ENCODE measurements at regions of chr7 and their contacts with region 1.

Region 1: GRCh38 chr7:44565097-44565794 is 8.5 kb downstream of the DDX56 start:
- DNase-seq: peak; percentile 88

Region 2: GRCh38 chr7:44490351-44491200 is 74.7 kb before region 1 on chr7 and contains the start of gene NUDCD3:
- intact Hi-C with region 1: loop called (anchors 5 kb)
- DNase-seq: peak; percentile 92
- total RNA-seq, gene NUDCD3: 90.3 TPM

Region 3: DNA sequence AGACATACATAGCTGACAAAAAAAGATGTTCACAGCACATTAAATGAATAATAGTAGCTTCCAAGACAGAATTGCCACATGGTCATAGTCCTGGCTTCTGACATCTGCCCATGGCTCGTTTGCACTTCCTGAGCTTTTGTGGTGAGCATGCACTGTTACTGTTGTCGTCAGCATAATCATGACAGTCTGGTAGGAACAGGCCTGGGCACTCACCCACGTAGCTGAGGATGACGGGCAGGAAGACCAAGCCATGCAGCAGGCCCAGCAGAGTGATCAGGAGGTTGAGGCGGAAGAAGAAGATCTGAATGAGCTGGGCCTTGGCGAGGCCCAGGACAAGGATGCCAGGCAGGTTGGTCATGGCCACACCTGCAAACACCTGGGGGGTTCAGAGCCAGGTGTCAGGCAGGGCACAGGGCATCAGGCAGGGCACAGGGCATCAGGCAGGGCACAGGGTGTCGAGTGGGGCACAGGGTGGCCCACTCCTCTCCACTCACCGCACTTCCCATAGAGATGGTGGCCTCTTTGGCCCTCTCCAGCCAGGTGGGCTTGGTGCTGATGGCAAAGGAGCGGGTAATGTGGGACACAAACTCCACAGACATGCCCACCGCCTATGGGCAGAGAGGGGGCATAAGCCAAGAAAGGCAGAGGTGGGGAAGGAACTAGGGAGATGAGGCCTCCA is 49.5 kb before region 1 on chr7:
- intact Hi-C with region 1: no loop called
- DNase-seq: no peak

Measured in cardiac septum (tissue), 1 donor.